Activated naive CD4-positive, alpha-beta T cell treated with anti-CD3 and anti-CD28 coated beads for 36 hours (primary cell): ENCODE measurements at regions of chr1 and their contacts with region 1.

Region 1: DNA sequence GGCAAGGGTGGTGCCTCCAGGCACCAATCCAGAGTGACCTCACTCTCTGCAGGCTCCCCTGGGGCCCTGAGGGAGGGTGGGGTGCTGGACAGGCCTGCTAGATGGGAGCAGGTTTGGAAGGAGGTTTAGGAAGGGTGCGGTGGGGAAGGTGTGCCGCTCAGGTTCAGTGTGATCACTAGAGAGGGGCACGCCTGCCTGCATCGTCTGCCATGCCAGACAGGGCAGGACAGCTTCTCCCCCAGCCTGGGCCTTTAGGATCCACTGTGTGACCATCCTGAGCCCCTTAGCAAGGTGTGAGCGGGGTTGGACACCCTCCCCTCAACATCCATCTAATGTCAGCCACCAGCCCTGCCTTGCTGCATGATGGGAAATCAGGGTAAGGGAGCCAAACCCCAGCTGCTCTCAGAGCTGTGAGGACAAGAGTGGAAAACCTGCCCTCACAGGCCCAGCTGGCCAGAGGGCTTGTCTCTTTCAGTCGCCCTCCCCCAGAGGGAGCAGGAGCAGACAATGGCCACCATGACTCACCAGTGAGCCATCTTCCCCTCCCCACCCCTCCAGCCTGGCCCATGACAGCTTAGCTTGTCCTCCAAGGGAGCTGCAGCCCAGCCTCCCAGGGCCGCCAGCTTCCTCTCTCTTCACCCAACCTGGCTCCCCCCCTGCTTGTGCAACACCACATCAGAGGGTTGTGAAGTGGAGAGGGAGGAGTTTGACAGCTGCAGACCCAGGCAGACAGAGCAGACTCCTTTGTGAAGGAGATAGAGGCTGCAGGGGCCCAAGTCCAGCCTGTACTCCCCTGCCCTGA is 37.0 kb downstream of the NUAK2 start:
- DNase-seq: peak; percentile 97
- H3K4me3 Mint-ChIP-seq: peak overlapping the region; percentile 29
- H3K27ac Mint-ChIP-seq: peak overlapping the region; percentile 87
- H3K4me1 Mint-ChIP-seq: peaks cover 77% of the 10 kb centered on the region
- H3K27me3 Mint-ChIP-seq: no peaks in the 10 kb centered on the region

Region 2: GRCh38 chr1:203558064-203558760 is 1726.3 kb before region 1 on chr1:
- CTCF ChIA-PET with region 1: no interaction called
- intact Hi-C with region 1: no loop called
- DNase-seq: no peak
- H3K4me3 Mint-ChIP-seq: no peak overlapping the region
- H3K27ac Mint-ChIP-seq: no peak overlapping the region
- H3K4me1 Mint-ChIP-seq: no peaks in the 10 kb centered on the region
- H3K27me3 Mint-ChIP-seq: no peaks in the 10 kb centered on the region

Region 3: GRCh38 chr1:205237526-205238484 is 46.7 kb before region 1 on chr1:
- CTCF ChIA-PET with region 1: interaction called, 3 read pairs
- intact Hi-C with region 1: loop called (anchors 1 kb)
- DNase-seq: peak; percentile 92
- H3K4me3 Mint-ChIP-seq: peak overlapping the region; percentile 44
- H3K27ac Mint-ChIP-seq: peak overlapping the region; percentile 98
- H3K4me1 Mint-ChIP-seq: peaks cover 77% of the 10 kb centered on the region
- H3K27me3 Mint-ChIP-seq: no peaks in the 10 kb centered on the region

Region 4: GRCh38 chr1:205273551-205273982 is 11.0 kb before region 1 on chr1:
- CTCF ChIA-PET with region 1: interaction called, 50 read pairs
- intact Hi-C with region 1: loop called (anchors 1 kb)
- DNase-seq: peak; percentile 94
- H3K4me3 Mint-ChIP-seq: no peak overlapping the region
- H3K27ac Mint-ChIP-seq: peak overlapping the region; percentile 27
- H3K4me1 Mint-ChIP-seq: peaks cover 51% of the 10 kb centered on the region
- H3K27me3 Mint-ChIP-seq: no peaks in the 10 kb centered on the region

Region 5: GRCh38 chr1:205313563-205314308 is 29.2 kb after region 1 on chr1:
- CTCF ChIA-PET with region 1: interaction called, 948 read pairs
- intact Hi-C with region 1: loop called (anchors 1 kb)
- DNase-seq: peak; percentile 77
- H3K4me3 Mint-ChIP-seq: peak overlapping the region; percentile 80
- H3K27ac Mint-ChIP-seq: peak overlapping the region; percentile 93
- H3K4me1 Mint-ChIP-seq: peaks cover 85% of the 10 kb centered on the region
- H3K27me3 Mint-ChIP-seq: no peaks in the 10 kb centered on the region

Region 6: GRCh38 chr1:205422993-205423625 is 138.6 kb after region 1 on chr1:
- CTCF ChIA-PET with region 1: no interaction called
- intact Hi-C with region 1: no loop called
- DNase-seq: no peak
- H3K4me3 Mint-ChIP-seq: no peak overlapping the region
- H3K27ac Mint-ChIP-seq: no peak overlapping the region
- H3K4me1 Mint-ChIP-seq: no peaks in the 10 kb centered on the region
- H3K27me3 Mint-ChIP-seq: peaks cover 3% of the 10 kb centered on the region

Region 7: DNA sequence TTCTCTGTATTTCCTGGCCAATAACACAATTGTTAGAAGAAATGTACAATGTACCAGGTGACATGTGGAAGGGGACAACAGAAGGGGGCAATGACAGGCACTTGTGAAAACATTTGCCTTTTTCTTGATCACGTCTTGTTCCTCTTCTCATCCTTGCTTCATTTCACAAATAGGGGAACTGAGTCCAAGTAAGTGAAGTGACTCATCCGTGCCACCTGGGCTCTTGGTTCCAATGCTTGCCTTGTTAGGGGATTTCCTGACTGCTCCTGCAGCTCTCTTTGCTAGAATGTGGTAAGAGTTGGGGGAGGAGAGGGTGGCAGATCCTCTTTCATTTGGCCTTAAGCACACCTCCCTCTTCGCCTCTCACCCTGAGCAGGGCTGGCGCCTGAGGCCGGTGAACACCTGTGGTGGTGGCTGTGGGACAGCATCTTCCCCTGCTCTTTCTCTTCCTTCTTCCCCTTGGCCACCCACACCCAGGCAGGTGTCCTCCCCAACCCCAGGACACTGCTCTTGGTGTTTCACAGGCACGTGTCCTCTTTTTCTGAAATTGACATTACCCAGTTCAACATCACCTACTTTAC is 766.2 kb after region 1 on chr1:
- CTCF ChIA-PET with region 1: no interaction called
- intact Hi-C with region 1: loop called (anchors 5 kb)
- DNase-seq: peak; percentile 87
- H3K4me3 Mint-ChIP-seq: no peak overlapping the region
- H3K27ac Mint-ChIP-seq: peak overlapping the region; percentile 60
- H3K4me1 Mint-ChIP-seq: peaks cover 47% of the 10 kb centered on the region
- H3K27me3 Mint-ChIP-seq: peaks cover 11% of the 10 kb centered on the region